HEK293 (cell line): ENCODE measurements at regions of chr2 and their contacts with region 1.

Region 1: GRCh38 chr2:174997110-174997509 is 8.1 kb downstream of the CHN1 start:
- H3K4me3 ChIP-seq: no peak overlapping the region
- H3K27ac ChIP-seq: no peak overlapping the region
- H3K4me1 ChIP-seq: no peaks in the 10 kb centered on the region; the same call in none of the 2 replicates
- CTCF ChIP-seq: no peak

Region 2: GRCh38 chr2:174985630-174986029 is 11.5 kb before region 1 on chr2:
- CTCF ChIA-PET with region 1: interaction called, 18 read pairs
- POLR2A ChIA-PET with region 1: interaction called, 3 read pairs
- H3K4me3 ChIP-seq: no peak overlapping the region
- H3K27ac ChIP-seq: no peak overlapping the region
- H3K4me1 ChIP-seq: 0 out of 2 replicates have a peak, but pooled peaks cover 4% of the 10 kb centered on the region
- CTCF ChIP-seq: no peak